Activated T-helper 2 cell treated with anti-CD3 and anti-CD28 coated beads, Interferon-gamma antibody, Interleukin-2, Interleukin-4, amounts not matched to agents 10 μg/mL and 5 μg/mL and 100 μg/mL, durations not matched to agents 14 hours and 24 hours and 36 hours (primary cell): ENCODE measurements at regions of chr6 and their contacts with region 1.

Region 1: DNA sequence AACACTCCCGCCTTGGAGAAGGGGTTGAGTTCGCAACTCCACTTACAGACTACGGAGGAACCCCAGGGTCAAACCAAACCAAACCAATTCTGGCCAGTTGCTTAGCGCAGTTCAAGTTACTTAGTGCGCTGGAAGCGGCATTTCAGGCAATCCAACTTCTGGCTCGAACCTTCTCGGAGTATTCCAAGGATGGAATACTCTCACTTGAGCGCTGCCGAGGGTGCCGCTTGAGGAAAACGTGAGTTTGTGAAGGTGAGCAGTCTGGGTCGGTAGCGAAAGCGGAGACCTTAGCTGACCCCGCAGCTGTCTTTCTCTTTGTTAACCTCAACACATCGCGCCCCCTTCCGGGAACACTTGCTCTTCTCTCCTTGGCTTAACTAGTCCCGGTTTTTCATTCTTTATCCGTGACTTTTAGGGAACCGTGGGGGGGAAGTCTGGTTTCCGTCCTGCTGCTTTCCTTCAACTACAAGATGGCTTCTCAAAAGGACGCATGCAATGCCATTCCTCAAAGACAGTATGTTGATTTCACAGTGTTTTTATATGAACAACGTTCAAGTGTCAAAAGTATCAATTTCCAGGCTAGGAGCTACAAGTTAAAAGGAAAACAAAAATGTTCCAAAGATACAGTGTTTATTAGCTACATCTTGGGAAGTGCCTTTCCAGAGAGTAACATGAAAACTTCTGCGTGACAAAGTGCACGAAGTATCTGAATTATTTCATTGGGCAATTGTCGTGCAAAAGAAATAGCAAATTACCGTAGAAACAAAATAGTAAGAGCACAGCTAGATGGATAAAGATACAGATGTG is 742 bp upstream of the PNISR start:
- DNase-seq: no peak
- H3K4me3 Mint-ChIP-seq: peak overlapping the region; percentile 98
- H3K27ac Mint-ChIP-seq: peak overlapping the region; percentile 100
- H3K4me1 Mint-ChIP-seq: peaks cover 50% of the 10 kb centered on the region
- H3K27me3 Mint-ChIP-seq: no peaks in the 10 kb centered on the region

Region 2: GRCh38 chr6:99080191-99080590 is 345.7 kb before region 1 on chr6:
- intact Hi-C with region 1: no loop called
- DNase-seq: no peak
- H3K4me3 Mint-ChIP-seq: no peak overlapping the region
- H3K27ac Mint-ChIP-seq: no peak overlapping the region
- H3K4me1 Mint-ChIP-seq: no peaks in the 10 kb centered on the region
- H3K27me3 Mint-ChIP-seq: peaks cover 4% of the 10 kb centered on the region

Region 3: DNA sequence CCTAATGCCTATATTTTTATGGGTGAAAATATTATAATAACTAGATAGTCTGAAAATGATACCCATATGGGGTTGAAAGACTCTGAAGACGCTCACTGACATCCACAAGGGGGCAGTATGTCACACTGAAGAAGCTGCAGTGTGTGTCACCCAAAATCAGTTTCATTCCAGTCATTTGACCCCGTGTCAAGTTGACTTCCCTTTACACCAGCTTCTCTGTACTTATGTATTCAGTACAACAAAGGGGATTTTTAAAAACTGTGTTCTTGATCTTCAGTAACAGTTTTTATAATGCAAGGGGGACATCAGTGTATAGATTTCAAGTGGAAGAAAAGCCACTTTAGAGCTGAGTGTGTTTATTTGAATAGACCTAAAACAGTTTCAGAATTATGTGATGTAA is 95.7 kb before region 1 on chr6:
- intact Hi-C with region 1: loop called (anchors 1 kb)
- DNase-seq: peak; percentile 40
- H3K4me3 Mint-ChIP-seq: no peak overlapping the region
- H3K27ac Mint-ChIP-seq: no peak overlapping the region
- H3K4me1 Mint-ChIP-seq: peaks cover 5% of the 10 kb centered on the region
- H3K27me3 Mint-ChIP-seq: peaks cover 2% of the 10 kb centered on the region

Region 4: DNA sequence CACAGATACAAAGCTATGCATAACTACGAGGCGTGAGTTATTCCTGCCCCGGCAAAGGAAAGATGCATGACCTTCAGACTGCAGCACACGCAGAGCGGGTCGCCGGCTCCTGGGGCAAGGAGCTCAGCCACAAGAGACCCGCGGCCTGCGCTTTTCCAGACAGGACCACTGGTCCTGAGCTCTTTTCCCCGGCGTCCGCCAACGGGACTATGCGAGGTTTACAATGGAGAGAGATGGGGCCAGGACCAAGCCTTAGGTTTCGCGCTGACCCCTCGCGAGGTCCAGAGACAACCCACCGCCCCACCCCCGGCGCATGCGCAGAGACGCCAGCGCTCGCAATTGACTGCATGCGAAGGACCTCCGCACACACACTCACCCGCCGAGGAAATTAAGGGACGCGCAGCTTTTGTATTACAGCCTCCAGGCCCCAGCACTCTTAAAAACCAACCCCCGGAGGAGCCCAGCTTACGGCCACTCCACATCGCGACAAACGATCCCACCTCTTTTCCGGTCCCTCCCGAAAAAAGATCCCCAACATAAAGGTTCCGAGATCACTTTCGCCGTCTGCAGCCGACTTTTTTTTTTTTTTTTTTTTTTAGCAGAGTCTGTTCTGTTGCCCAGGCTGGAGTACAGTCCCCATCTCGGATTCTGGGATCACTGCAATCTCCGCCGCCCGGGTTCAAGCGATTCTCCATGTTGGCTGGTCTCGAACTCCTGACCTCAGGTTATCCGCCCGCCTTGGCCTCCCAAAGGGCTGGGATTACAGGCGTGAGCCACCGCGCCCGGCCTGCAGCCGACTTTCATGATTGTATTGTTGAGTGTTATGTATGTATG is 31.9 kb before region 1 on chr6 and contains the start of gene COQ3:
- intact Hi-C with region 1: loop called (anchors 1 kb)
- DNase-seq: peak; percentile 65
- H3K4me3 Mint-ChIP-seq: peak within 1 kb of the TSS; percentile 91
- H3K27ac Mint-ChIP-seq: peak within 1 kb of the TSS; percentile 88
- H3K4me1 Mint-ChIP-seq: peaks cover 6% of the 10 kb centered on the region
- H3K27me3 Mint-ChIP-seq: no peaks in the 10 kb centered on the region
- total RNA-seq, gene COQ3: 12.9 and 13.7 TPM in 2 replicates

Region 5: DNA sequence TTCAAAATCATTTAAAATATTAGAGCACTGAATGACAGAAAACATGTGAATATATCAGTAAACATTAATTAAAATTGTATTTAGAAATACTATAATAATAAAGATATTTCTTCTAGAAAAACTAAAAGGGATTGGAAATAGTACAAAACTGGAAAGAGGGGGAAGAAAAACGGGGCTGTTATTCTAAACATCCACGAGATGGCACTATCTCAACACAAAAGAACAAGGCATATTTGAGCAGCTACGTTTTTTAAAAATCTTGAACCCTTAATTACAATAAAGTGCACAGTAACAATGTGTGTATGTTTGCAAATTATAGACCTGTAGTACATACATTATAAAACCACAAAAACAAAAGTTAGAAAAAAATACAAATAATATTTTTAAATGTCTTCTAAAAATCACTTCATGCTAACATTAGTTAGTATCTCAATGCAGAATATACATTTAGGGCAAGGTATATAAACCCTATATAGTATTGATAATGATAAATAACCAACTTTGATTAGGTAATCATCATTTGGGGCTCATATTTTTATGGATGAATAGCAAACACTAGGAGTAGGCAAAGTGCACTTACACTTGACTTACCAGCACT is 41.8 kb after region 1 on chr6:
- intact Hi-C with region 1: no loop called
- DNase-seq: no peak
- H3K4me3 Mint-ChIP-seq: no peak overlapping the region
- H3K27ac Mint-ChIP-seq: no peak overlapping the region
- H3K4me1 Mint-ChIP-seq: no peaks in the 10 kb centered on the region
- H3K27me3 Mint-ChIP-seq: no peaks in the 10 kb centered on the region

Region 6: GRCh38 chr6:99490608-99491007 is 64.8 kb after region 1 on chr6:
- intact Hi-C with region 1: no loop called
- DNase-seq: no peak
- H3K4me3 Mint-ChIP-seq: no peak overlapping the region
- H3K27ac Mint-ChIP-seq: no peak overlapping the region
- H3K4me1 Mint-ChIP-seq: no peaks in the 10 kb centered on the region
- H3K27me3 Mint-ChIP-seq: no peaks in the 10 kb centered on the region

Region 7: GRCh38 chr6:99514089-99514488 is 88.2 kb after region 1 on chr6:
- intact Hi-C with region 1: loop called (anchors 1 kb)
- DNase-seq: no peak
- H3K4me3 Mint-ChIP-seq: peak overlapping the region; percentile 97
- H3K27ac Mint-ChIP-seq: no peak overlapping the region
- H3K4me1 Mint-ChIP-seq: peaks cover 25% of the 10 kb centered on the region
- H3K27me3 Mint-ChIP-seq: peaks cover 6% of the 10 kb centered on the region